Transverse colon (tissue), 4 donors: ENCODE measurements at regions of chr16 and their contacts with region 1.

Region 1: DNA sequence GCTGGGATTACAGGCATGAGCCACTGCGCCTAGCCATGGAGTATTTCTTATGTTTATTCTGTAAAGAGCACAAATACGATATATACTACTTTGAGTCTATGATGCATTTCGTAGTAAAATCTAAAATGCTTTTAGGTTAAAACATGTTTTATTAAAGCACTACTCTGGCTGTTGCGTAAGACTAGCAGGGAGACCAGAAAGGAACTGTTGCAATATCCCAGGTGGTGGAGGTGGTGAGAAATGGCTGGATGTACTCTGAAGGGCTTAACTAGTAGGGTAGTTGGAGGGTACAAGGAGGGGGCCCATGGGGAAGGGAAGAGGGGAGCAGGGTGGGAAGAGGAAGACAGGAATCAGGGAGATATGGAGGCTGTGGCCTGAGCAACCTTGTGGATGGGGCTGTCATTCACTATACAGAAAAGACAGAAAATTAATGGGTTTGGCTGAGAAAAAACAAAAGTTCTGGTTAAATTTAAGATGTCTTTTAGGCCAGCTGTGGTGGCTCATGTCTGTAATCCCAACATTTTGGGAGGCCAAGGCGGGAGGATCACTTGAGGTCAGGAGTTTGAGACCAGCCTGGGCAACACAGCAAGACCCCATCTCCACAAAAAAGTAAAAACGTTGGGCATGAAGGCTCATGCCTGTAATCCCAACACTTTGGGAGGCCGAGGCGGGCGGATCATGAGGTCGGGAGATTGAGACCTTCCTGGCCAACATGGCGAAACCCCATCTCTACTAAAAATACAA is 35.8 kb downstream of the ST3GAL2 start:
- DNase-seq: no peak
- H3K4me3 ChIP-seq: no peak overlapping the region
- H3K27ac ChIP-seq: no peak overlapping the region
- H3K4me1 ChIP-seq: peaks cover 0 to 8% (median 5%) of the 10 kb centered on the region in 4 donors
- H3K27me3 ChIP-seq: no peaks in the 10 kb centered on the region
- CTCF ChIP-seq: no peak
- EP300 ChIP-seq: no peak
- POLR2A ChIP-seq: no peak

Region 2: DNA sequence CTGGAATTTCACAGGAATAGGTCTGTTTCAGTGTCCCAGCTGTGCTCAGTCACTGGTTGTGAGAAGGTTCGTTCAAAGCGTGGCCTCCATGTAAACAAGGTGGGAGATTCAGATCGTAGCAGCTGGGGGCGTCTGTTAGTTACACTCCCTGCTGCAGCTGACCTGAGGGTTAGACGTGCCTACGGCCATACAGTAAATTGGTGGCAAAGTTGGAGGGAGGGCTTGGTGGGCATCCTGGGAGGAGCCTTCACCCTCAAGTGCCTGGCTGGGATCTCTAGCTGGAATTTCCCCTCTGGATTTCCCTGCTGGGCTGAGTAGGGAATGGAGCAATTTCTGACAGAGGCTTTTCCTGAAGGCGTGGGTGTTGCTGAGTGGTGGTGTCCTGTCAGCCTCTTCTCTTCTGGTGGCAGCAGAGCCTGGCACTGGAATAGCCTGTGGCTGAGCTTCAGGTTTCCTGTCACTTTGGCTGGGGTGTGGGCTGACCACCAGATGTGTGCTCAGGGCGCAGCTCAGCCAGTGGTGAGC is 57.7 kb after region 1 on chr16:
- in situ Hi-C with region 1: loop called in 2 of 4 experiments (anchors 10 kb)
- intact Hi-C with region 1: no loop called
- DNase-seq: no peak
- H3K4me3 ChIP-seq: no peak overlapping the region
- H3K27ac ChIP-seq: no peak overlapping the region
- H3K4me1 ChIP-seq: peaks cover 0 to 5% (median 2%) of the 10 kb centered on the region in 4 donors
- H3K27me3 ChIP-seq: no peaks in the 10 kb centered on the region
- CTCF ChIP-seq: no peak
- EP300 ChIP-seq: no peak
- POLR2A ChIP-seq: no peak